Adrenal gland (tissue), 19 donors: ENCODE measurements at regions of chr5 and their contacts with region 1.

Region 1: DNA sequence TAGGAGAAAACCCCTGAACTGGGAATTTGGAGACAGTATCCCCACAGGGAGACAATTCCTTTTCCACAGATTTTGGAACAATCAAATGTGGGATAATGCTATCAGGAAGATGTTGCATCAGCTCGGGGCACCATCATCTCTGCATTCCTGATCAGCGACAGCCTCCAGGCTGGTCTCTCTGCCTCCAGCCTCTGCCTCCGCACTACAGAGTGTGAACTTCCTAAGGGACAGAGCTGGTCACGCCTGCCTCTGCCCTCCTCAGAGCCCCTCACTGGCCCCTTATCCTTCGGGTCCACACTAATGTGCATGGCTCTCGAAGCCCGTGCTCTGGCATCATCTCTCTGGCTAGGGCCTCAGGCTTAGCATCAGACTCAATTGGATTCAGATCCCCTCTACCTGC is 8.6 kb downstream of the FOXI1 start:
- DNase-seq: no peak
- H3K4me3 ChIP-seq: no peak overlapping the region
- H3K27ac ChIP-seq: no peak overlapping the region
- H3K4me1 ChIP-seq: no peaks in the 10 kb centered on the region
- H3K27me3 ChIP-seq: no peaks in the 10 kb centered on the region
- CTCF ChIP-seq: no peak
- POLR2A ChIP-seq: no peak

Region 2: DNA sequence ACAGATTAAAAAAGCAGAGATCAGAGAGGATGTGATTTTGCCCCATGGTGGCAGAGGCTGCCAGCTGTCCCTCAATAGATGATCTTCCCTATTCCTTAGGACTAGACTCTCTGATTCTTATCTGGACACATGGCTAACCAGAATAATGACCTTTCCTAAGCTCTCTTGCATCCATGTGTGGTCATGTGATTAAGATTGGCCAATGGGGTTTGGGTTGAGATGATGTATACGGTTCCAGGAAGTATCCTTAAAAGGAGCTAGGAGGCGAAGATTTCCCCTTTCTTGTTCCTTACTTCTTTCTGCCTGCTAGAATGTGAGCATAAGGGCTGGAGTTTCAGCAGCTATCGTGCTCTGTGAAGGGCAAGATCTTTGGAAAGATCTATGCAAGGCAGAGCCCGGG is 31.2 kb after region 1 on chr5:
- intact Hi-C with region 1: loop called in 1 of 2 experiments (anchors 2 kb)
- DNase-seq: no peak
- H3K4me3 ChIP-seq: no peak overlapping the region
- H3K27ac ChIP-seq: no peak overlapping the region
- H3K4me1 ChIP-seq: no peaks in the 10 kb centered on the region
- H3K27me3 ChIP-seq: no peaks in the 10 kb centered on the region
- CTCF ChIP-seq: no peak
- POLR2A ChIP-seq: no peak